HEK293 (cell line): ENCODE measurements at regions of chr1 and their contacts with region 1.

Region 1: GRCh38 chr1:205658943-205659581 is 21.2 kb downstream of the SLC45A3 start:
- H3K4me3 ChIP-seq: no peak overlapping the region
- H3K27ac ChIP-seq: no peak overlapping the region
- H3K4me1 ChIP-seq: no peaks in the 10 kb centered on the region
- CTCF ChIP-seq: peak; percentile 87

Region 2: DNA sequence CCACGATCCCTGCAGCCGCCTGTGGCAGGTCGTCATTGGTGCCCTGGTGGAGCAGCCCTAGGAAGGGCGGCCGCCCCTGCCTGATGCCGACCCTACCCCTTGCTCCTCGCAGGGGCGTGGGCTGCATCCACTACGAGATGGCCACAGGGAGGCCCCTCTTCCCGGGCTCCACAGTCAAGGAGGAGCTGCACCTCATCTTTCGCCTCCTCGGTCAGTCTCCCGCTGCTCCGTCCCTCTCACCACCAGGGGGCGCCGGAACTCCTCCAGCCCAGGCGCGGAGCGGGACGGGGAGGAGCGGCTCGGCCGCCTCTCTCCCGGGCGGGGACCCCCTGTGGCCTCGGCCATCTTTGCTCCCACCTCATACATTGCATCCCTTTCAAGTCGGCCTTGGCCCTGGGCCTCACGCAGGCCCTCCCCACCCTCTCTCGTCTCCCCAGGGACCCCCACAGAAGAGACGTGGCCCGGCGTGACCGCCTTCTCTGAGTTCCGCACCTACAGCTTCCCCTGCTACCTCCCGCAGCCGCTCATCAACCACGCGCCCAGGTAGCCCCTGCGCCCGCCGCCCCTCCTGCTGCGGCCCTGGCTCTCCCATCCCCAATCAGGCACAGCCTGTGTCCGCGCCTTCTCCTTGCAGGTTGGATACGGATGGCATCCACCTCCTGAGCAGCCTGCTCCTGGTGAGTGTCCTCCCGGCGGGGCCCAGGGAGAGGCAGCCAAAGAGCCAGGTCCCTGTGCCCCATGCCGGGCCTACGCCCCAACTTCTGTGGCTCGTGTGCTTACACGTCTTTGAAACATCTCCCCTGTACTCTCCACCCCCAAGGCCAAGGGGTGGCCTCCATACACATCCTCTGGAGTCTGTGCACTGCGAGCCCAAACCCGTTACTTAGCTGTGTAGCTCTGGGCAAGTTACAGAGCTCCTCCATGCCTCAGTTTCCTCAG is 129.9 kb before region 1 on chr1:
- CTCF ChIA-PET with region 1: interaction called, 79 read pairs
- POLR2A ChIA-PET with region 1: no interaction called
- H3K4me3 ChIP-seq: no peak overlapping the region
- H3K27ac ChIP-seq: no peak overlapping the region
- H3K4me1 ChIP-seq: no peaks in the 10 kb centered on the region
- CTCF ChIP-seq: peak; percentile 97

Region 3: GRCh38 chr1:205600085-205600484 is 59.0 kb before region 1 on chr1:
- CTCF ChIA-PET with region 1: interaction called, 414 read pairs
- POLR2A ChIA-PET with region 1: no interaction called
- H3K4me3 ChIP-seq: no peak overlapping the region
- H3K27ac ChIP-seq: no peak overlapping the region
- H3K4me1 ChIP-seq: no peaks in the 10 kb centered on the region
- CTCF ChIP-seq: no peak

Region 4: GRCh38 chr1:205645519-205645918 is 13.5 kb before region 1 on chr1:
- CTCF ChIA-PET with region 1: interaction called, 23 read pairs
- POLR2A ChIA-PET with region 1: interaction called, 3 read pairs
- H3K4me3 ChIP-seq: no peak overlapping the region
- H3K27ac ChIP-seq: no peak overlapping the region
- H3K4me1 ChIP-seq: no peaks in the 10 kb centered on the region
- CTCF ChIP-seq: no peak

Region 5: GRCh38 chr1:205700865-205701401 is 41.9 kb after region 1 on chr1:
- CTCF ChIA-PET with region 1: interaction called, 41 read pairs
- POLR2A ChIA-PET with region 1: interaction called, 5 read pairs
- H3K4me3 ChIP-seq: no peak overlapping the region
- H3K27ac ChIP-seq: no peak overlapping the region
- H3K4me1 ChIP-seq: 0 out of 2 replicates have a peak, but pooled peaks cover 4% of the 10 kb centered on the region
- CTCF ChIP-seq: no peak

Region 6: GRCh38 chr1:205791568-205792180 is 132.6 kb after region 1 on chr1:
- CTCF ChIA-PET with region 1: interaction called, 11 read pairs
- POLR2A ChIA-PET with region 1: no interaction called
- H3K4me3 ChIP-seq: no peak overlapping the region
- H3K27ac ChIP-seq: no peak overlapping the region
- H3K4me1 ChIP-seq: 0 out of 2 replicates have a peak, but pooled peaks cover under 1% of the 10 kb centered on the region
- CTCF ChIP-seq: peak; percentile 79